Lower lobe of right lung (tissue), 2 donors: ENCODE measurements at regions of chr6 and their contacts with region 1.

Region 1: DNA sequence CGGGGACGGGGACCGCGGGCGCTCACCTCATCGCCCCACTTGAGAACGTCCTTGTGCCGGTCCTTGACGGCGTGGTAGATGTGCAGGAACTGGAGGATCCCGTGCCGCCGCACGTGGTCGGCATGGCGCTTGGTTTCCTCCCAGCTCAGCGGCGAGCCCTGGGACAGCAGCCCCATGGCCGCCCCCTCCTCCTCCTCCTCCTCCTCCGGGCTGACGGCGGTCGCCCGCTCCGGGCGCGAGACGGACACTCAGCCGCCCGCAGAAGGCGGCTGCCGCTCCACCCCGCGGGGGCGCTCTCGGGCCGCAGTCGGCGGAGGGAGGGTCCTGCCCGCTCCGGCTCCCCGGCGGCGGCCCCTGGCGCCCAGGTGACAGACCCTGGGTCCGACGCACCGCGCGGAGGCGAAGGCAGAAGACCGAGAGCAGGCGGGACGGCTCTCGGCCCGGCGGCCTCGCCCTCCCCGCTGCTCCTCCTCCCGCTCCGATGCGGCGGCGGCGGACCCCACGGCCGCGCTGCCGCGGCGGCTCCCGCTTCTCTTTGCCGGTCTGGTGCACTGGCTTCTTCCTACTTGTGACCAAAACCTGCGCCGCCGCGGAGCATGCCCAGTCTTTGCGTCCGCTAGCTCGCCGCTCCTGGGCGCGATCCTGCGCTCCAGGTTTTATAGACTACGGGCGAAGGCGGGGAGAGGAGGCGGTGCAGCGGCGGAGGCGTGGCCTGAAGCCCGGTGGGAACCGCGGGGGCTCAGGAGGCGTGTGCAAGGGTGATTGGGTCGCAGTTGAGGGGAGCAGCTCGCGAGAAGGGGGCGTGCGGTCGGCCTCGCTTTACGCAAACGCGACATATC is at the start of gene GCLC:
- DNase-seq: peak; percentile 95
- ATAC-seq: peak; percentile 82 to 88
- H3K4me3 ChIP-seq: peak within 1 kb of the TSS; percentile 68
- H3K27ac ChIP-seq: peak within 1 kb of the TSS; percentile 92
- H3K4me1 ChIP-seq: peaks cover 38% of the 10 kb centered on the region
- H3K27me3 ChIP-seq: no peaks in the 10 kb centered on the region
- CTCF ChIP-seq: peak; percentile 64
- total RNA-seq, gene GCLC: 37.0 TPM

Region 2: DNA sequence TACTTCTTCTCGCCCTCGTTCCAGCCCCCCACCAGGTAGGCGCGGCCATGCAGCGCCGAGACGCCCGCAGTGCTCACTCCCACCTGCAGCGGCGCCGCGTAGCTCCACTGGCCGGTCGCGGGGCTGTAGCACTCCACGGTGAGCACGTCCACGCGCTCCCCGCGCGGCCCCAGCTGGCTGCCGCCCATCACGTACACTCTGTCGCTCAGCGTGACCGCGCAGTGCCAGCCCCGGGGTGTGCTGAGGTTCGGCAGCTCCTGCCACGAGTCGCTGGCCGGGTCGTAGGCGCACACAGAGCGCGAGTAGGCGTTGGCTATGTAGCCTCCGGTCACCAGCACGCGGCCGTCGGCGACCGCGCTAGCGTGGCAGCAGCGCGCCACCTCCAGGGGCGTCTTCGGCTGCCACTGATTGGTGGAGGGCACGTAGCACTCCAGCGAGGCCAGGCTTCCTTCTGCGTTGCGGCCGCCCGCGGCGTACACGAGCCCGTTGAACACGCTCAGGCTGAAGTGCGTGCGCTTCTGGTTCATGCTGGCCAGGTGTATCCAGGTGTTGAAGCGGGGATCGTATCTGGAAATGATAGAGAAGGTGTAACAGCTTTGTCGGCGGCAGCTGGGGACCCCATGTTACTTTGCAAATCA is 107.2 kb after region 1 on chr6:
- intact Hi-C with region 1: loop called (anchors 10 kb)
- DNase-seq: peak; percentile 88
- ATAC-seq: peak; percentile 96 to 97
- H3K4me3 ChIP-seq: peak overlapping the region; percentile 60
- H3K27ac ChIP-seq: peak overlapping the region; percentile 47
- H3K4me1 ChIP-seq: peaks cover 14% of the 10 kb centered on the region
- H3K27me3 ChIP-seq: peaks cover 4% of the 10 kb centered on the region
- CTCF ChIP-seq: peak; percentile 49